CD8-positive, alpha-beta T cell (primary cell): ENCODE measurements at regions of chr2 and their contacts with region 1.

Region 1: GRCh38 chr2:60581433-60582282 is 28.2 kb upstream of the BCL11A start:
- DNase-seq: peak; percentile 41 to 75 (median 60)
- ATAC-seq: peak; percentile 97
- H3K4me3 ChIP-seq: peak overlapping the region in 1 of 2 experiments; percentile 3
- H3K4me3 Mint-ChIP-seq: peak overlapping the region; percentile 16
- H3K27ac ChIP-seq: no peak overlapping the region
- H3K27ac Mint-ChIP-seq: no peak overlapping the region
- H3K4me1 ChIP-seq: no peaks in the 10 kb centered on the region
- H3K4me1 Mint-ChIP-seq: no peaks in the 10 kb centered on the region
- H3K27me3 ChIP-seq: peaks cover 0 to 12% of the 10 kb centered on the region in 2 experiments
- H3K27me3 Mint-ChIP-seq: peaks cover 27% of the 10 kb centered on the region
- CTCF ChIP-seq: peak; percentile 79

Region 2: DNA sequence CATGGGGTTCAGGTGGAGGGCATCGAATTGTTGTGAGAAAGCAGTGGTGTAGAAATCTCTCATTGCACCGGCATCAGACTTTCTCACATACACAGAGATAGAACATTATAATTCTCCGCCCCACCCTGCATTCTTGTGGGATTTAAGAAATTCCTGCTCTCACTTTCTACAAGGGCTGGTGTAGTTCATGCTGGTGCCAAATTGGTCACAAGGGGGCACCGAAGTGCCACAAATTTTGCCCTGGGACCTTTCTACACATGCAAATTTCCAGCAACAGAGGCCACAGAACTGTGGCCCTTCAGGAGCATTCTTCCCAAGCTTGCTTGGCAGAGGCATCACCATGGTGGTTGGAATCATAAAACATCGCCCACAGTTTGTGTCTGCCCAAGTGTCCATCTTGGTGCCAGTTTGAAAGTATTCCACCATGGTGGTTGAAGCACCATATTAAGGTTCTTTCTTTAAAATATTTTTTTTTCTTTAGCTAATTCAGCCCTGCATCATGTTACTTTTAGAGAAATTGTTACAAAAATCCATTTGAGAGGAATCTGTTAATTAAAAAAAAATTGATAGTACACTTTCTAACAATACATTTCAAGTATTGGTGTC is 1819.4 kb before region 1 on chr2:
- CTCF ChIA-PET with region 1: interaction called, 3 read pairs
- POLR2A ChIA-PET with region 1: no interaction called
- intact Hi-C with region 1: loop called in 1 of 2 experiments (anchors 2 kb)
- DNase-seq: peak in 4 of 9 experiments; percentile 1 to 34 (median 12)
- ATAC-seq: no peak
- H3K4me3 ChIP-seq: no peak overlapping the region
- H3K4me3 Mint-ChIP-seq: no peak overlapping the region
- H3K27ac ChIP-seq: no peak overlapping the region
- H3K27ac Mint-ChIP-seq: no peak overlapping the region
- H3K4me1 ChIP-seq: no peaks in the 10 kb centered on the region
- H3K4me1 Mint-ChIP-seq: no peaks in the 10 kb centered on the region
- H3K27me3 ChIP-seq: no peaks in the 10 kb centered on the region
- H3K27me3 Mint-ChIP-seq: peaks cover 3% of the 10 kb centered on the region
- CTCF ChIP-seq: peak; percentile 41

Region 3: GRCh38 chr2:59301466-59302402 is 1279.9 kb before region 1 on chr2:
- CTCF ChIA-PET with region 1: interaction called, 4 read pairs
- POLR2A ChIA-PET with region 1: no interaction called
- intact Hi-C with region 1: loop called (anchors 2 to 5 kb)
- DNase-seq: peak in 3 of 9 experiments; percentile 6 to 61 (median 26)
- ATAC-seq: no peak
- H3K4me3 ChIP-seq: no peak overlapping the region
- H3K4me3 Mint-ChIP-seq: no peak overlapping the region
- H3K27ac ChIP-seq: no peak overlapping the region
- H3K27ac Mint-ChIP-seq: no peak overlapping the region
- H3K4me1 ChIP-seq: no peaks in the 10 kb centered on the region
- H3K4me1 Mint-ChIP-seq: no peaks in the 10 kb centered on the region
- H3K27me3 ChIP-seq: no peaks in the 10 kb centered on the region
- H3K27me3 Mint-ChIP-seq: no peaks in the 10 kb centered on the region
- CTCF ChIP-seq: peak; percentile 48

Region 4: GRCh38 chr2:59502981-59503380 is 1078.7 kb before region 1 on chr2:
- CTCF ChIA-PET with region 1: no interaction called
- POLR2A ChIA-PET with region 1: no interaction called
- intact Hi-C with region 1: no loop called
- DNase-seq: no peak
- ATAC-seq: no peak
- H3K4me3 ChIP-seq: no peak overlapping the region
- H3K4me3 Mint-ChIP-seq: no peak overlapping the region
- H3K27ac ChIP-seq: no peak overlapping the region
- H3K27ac Mint-ChIP-seq: no peak overlapping the region
- H3K4me1 ChIP-seq: no peaks in the 10 kb centered on the region
- H3K4me1 Mint-ChIP-seq: no peaks in the 10 kb centered on the region
- H3K27me3 ChIP-seq: no peaks in the 10 kb centered on the region
- H3K27me3 Mint-ChIP-seq: no peaks in the 10 kb centered on the region
- CTCF ChIP-seq: no peak

Region 5: GRCh38 chr2:59726228-59727120 is 855.2 kb before region 1 on chr2:
- CTCF ChIA-PET with region 1: no interaction called
- POLR2A ChIA-PET with region 1: no interaction called
- intact Hi-C with region 1: no loop called
- DNase-seq: no peak
- ATAC-seq: no peak
- H3K4me3 ChIP-seq: no peak overlapping the region
- H3K4me3 Mint-ChIP-seq: no peak overlapping the region
- H3K27ac ChIP-seq: no peak overlapping the region
- H3K27ac Mint-ChIP-seq: no peak overlapping the region
- H3K4me1 ChIP-seq: no peaks in the 10 kb centered on the region
- H3K4me1 Mint-ChIP-seq: no peaks in the 10 kb centered on the region
- H3K27me3 ChIP-seq: no peaks in the 10 kb centered on the region
- H3K27me3 Mint-ChIP-seq: no peaks in the 10 kb centered on the region
- CTCF ChIP-seq: no peak

Region 6: DNA sequence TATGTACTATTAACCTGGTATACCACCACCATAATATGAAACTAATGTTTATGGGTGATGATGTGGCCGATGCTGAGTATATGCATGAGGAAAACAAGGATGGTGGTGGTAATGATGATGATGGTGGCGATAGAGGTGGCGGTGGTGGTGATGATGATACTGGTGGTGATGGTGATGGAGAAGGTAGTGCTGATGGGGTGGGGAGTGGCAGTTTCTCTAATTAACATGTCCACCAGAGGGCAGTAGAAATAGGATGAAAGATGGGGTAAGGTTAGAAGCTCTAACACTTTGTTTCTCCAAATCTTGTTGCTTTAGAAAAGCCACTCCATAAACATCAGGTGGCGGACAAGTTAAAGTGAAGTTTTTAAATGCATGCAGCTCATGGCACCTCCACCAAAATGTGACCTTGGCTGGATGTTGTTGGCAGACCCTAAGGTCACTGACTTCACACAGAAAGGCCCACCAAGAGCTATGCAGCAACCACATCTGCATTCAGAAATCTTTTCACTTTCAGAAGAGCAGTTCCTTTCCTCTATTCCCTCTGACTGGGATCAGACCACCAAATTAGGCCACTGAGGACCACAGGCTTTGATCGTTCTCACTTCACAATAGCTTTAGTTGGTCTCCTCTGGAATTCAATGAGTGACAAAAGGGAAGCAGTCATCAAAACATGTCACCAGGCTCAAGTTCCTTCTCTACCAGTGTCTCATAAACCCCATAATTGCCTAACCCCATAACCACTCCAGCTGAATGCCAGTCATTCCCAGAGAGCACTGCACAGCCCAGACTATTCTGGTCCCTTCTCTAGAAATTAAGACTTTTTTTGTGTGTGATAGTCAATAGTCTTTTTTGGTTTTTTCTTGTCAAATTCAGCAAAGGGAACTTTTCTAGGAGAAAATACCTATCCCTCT is 20.7 kb before region 1 on chr2:
- CTCF ChIA-PET with region 1: interaction called, 28 read pairs
- POLR2A ChIA-PET with region 1: no interaction called
- intact Hi-C with region 1: no loop called
- DNase-seq: peak in 2 of 9 experiments; percentile 35 to 57
- ATAC-seq: peak; percentile 65
- H3K4me3 ChIP-seq: no peak overlapping the region
- H3K4me3 Mint-ChIP-seq: no peak overlapping the region
- H3K27ac ChIP-seq: no peak overlapping the region
- H3K27ac Mint-ChIP-seq: no peak overlapping the region
- H3K4me1 ChIP-seq: peaks cover 16% of the 10 kb centered on the region
- H3K4me1 Mint-ChIP-seq: peaks cover 16% of the 10 kb centered on the region
- H3K27me3 ChIP-seq: peaks cover 16 to 19% of the 10 kb centered on the region in 2 experiments
- H3K27me3 Mint-ChIP-seq: peaks cover 53% of the 10 kb centered on the region
- CTCF ChIP-seq: no peak

Region 7: DNA sequence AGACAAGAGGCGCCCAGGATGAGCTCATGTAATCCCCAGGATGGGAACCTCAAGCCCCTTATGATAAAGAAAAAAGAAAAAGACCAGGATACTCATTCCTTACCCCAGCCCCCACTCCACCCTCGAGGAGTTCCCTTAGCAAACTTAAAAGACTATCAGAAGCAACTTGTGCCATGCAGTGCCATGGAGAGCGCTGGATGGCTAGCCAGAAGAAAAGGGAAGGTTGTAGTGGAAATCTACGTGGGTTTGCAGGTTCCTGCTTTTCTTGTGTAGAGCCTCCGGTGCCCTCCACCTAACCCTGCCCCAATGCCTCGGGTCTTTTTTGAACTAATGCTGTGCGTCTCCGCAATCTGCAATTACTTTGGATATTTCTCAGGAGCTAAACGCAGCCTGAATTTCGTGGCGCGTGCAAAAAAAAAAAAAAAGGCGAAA is 12.0 kb before region 1 on chr2:
- CTCF ChIA-PET with region 1: interaction called, 14 read pairs
- POLR2A ChIA-PET with region 1: interaction called, 4 read pairs
- intact Hi-C with region 1: no loop called
- DNase-seq: peak in 1 of 9 experiments; percentile 10
- ATAC-seq: no peak
- H3K4me3 ChIP-seq: peak overlapping the region; percentile 21 to 28
- H3K4me3 Mint-ChIP-seq: no peak overlapping the region
- H3K27ac ChIP-seq: no peak overlapping the region
- H3K27ac Mint-ChIP-seq: no peak overlapping the region
- H3K4me1 ChIP-seq: peaks cover 11% of the 10 kb centered on the region
- H3K4me1 Mint-ChIP-seq: no peaks in the 10 kb centered on the region
- H3K27me3 ChIP-seq: peaks cover 8 to 22% of the 10 kb centered on the region in 2 experiments
- H3K27me3 Mint-ChIP-seq: peaks cover 23% of the 10 kb centered on the region
- CTCF ChIP-seq: no peak

Region 8: GRCh38 chr2:60998628-60999545 is 417.2 kb after region 1 on chr2:
- CTCF ChIA-PET with region 1: no interaction called
- POLR2A ChIA-PET with region 1: no interaction called
- intact Hi-C with region 1: no loop called
- DNase-seq: peak in 3 of 9 experiments; percentile 40 to 77 (median 70)
- ATAC-seq: peak; percentile 91
- H3K4me3 ChIP-seq: no peak overlapping the region
- H3K4me3 Mint-ChIP-seq: no peak overlapping the region
- H3K27ac ChIP-seq: no peak overlapping the region
- H3K27ac Mint-ChIP-seq: no peak overlapping the region
- H3K4me1 ChIP-seq: no peaks in the 10 kb centered on the region
- H3K4me1 Mint-ChIP-seq: no peaks in the 10 kb centered on the region
- H3K27me3 ChIP-seq: no peaks in the 10 kb centered on the region
- H3K27me3 Mint-ChIP-seq: no peaks in the 10 kb centered on the region
- CTCF ChIP-seq: peak; percentile 87